ENCODE measurements at regions of chr22 and their contacts with region 1.

Region 1: DNA sequence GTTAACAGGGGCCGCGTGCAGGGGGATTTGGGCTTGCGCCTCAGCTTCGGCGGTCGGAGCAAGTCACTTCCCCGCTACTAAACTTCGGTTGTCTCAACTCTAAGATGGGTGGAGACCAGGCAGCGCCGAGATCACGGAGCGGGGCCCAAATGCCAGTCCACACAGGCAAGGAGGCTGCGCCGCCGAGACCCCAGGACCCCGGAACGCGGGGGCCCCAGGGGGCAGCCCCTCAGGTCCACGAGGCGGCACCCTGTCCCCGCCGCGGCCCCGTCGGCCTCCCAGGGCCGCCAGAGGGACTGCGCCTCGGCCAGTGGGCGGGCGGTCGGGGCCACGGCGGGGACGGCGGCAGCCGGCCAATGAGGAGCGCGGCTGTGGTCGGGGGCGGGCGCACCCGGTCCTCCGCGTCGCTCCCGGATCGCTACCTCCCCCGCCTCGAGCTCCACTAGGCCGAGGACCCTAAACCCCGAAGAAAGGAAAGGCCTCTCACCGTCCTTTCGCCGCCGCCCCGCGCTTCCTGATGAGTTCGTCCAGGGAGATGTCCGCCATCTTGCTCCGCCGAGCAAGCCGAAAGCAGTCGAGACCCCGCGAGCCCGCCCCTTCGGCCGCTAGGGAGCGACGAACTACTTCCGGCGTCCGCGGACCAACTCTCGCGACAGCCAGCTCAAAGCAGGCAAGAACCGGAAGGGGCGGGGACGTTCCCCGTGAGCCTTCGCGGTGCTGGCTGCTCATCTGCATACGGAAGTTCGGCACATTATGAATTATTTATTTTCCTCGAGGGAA is at the start of gene POLDIP3:
- DNase-seq: peak; percentile 90 to 96 (median 90)
- ATAC-seq: peak; percentile 87
- H3K4me3 ChIP-seq: peak within 1 kb of the TSS; percentile 61
- H3K27ac ChIP-seq: peak within 1 kb of the TSS; percentile 95
- H3K4me1 ChIP-seq: peaks cover 15 to 43% of the 10 kb centered on the region in 2 experiments; a peak in 4 of 5 replicates
- H3K27me3 ChIP-seq: no peaks in the 10 kb centered on the region
- CTCF ChIP-seq: peak in 2 of 3 experiments; percentile 21 to 38; a peak in 3 of 6 replicates
- EP300 ChIP-seq: no peak
- POLR2A ChIP-seq: no peak
- RAD21 ChIP-seq: no peak
- polyA plus RNA-seq, gene POLDIP3: 14.3 to 22.3 TPM

Region 2: DNA sequence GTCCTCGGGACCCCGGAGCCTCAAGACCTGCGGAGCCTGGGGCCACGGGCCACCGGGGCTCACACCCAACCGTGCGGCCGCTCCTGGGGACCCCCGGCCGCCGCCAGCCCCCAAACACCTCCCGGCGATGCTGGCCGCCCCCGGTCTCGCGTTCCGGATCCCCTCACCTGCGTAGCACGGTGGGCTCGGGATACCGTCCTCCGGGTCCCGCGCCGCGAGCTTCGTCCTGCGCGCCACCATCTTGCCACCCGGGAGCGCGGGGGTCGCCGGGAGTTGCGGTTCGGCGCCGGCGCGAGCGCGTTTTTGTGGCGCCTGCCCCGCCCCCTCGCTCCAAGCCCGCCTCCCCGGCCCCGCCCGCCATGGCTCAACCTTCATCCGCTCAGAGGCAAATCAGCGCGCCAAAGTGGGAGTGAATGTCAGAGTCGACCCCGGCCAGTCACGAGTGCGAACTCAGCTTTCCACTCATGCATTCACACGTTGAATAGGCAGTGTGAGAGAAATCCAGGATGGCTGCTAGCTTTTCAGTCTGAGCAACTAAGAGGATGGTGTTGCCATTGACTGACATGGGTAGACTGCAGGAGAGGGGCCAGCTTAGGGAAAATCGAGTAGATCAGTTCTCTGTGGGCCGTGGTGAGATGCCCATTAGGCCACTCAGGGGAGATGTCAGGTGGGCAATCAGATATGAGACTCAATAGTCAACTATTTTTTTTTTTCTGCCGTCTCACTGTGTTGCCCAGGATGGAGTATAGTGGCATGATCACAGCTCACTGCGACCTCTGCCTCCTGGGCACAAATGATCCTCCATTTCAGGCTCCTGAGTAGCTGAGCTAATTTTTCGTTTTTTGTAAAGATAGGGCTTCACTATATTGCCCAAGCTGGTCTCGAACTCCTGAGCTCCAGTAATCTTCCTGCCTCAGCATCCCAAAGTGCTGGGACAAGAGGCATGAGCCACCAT is 32.5 kb before region 1 on chr22:
- CTCF ChIA-PET with region 1: no interaction called
- POLR2A ChIA-PET with region 1: interaction called, 17 read pairs
- in situ Hi-C with region 1: no loop called
- intact Hi-C with region 1: no loop called
- DNase-seq: peak; percentile 70 to 87 (median 76)
- ATAC-seq: peak; percentile 97
- H3K4me3 ChIP-seq: peak overlapping the region; percentile 57
- H3K27ac ChIP-seq: peak overlapping the region; percentile 74
- H3K4me1 ChIP-seq: peaks cover 0 to 7% of the 10 kb centered on the region in 2 experiments; a peak in 2 of 5 replicates
- H3K27me3 ChIP-seq: no peaks in the 10 kb centered on the region
- CTCF ChIP-seq: no peak
- EP300 ChIP-seq: no peak
- POLR2A ChIP-seq: peak; percentile 71
- RAD21 ChIP-seq: no peak

Region 3: DNA sequence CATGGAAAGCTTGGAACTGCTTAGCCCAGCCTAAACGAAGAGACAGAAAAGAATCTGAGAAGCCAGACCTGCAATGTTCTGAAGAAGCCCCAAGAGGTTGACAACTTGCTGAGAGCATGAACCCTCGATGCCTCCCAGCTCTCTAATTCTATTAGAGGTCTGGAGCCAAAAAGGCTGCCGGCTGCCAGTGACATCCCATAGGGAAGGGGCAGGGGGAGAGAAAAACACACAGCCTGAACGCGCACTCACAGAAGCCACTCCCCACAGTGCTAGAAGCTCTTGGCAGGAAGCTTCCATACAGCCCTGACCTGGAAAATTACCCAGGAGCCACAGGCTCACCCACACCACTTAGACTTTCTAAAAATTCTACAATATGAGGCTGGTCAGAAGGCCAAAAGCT is 18.2 kb before region 1 on chr22:
- CTCF ChIA-PET with region 1: no interaction called
- POLR2A ChIA-PET with region 1: interaction called, 31 read pairs
- in situ Hi-C with region 1: no loop called
- intact Hi-C with region 1: no loop called
- DNase-seq: no peak
- ATAC-seq: no peak
- H3K4me3 ChIP-seq: no peak overlapping the region
- H3K27ac ChIP-seq: no peak overlapping the region
- H3K4me1 ChIP-seq: no peaks in the 10 kb centered on the region
- H3K27me3 ChIP-seq: no peaks in the 10 kb centered on the region
- CTCF ChIP-seq: no peak
- EP300 ChIP-seq: no peak
- POLR2A ChIP-seq: no peak
- RAD21 ChIP-seq: no peak

Region 4: DNA sequence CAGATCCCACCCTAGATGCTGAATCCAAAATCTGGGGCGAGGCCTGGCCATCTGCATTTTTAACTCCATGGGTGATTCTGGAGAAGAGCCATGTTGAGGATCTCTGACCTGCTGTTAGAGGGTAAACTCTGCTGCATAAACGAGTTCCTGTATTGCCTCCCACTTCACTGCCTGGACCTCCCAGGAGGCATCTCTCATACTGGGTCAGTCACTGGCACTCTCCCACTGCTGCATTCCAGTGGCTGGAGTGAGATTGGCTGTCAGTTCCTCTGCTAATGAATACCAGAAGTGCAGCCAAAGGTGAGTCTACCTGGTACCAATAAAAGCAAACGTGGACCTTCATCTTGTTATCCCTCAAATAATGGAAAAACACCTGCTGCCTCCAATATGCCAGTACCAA is 10.1 kb before region 1 on chr22:
- CTCF ChIA-PET with region 1: no interaction called
- POLR2A ChIA-PET with region 1: interaction called, 10 read pairs
- in situ Hi-C with region 1: no loop called
- intact Hi-C with region 1: no loop called
- DNase-seq: no peak
- ATAC-seq: no peak
- H3K4me3 ChIP-seq: no peak overlapping the region
- H3K27ac ChIP-seq: no peak overlapping the region; the same call in 2 of the 3 replicates
- H3K4me1 ChIP-seq: no peaks in the 10 kb centered on the region; a peak in 1 of 5 replicates
- H3K27me3 ChIP-seq: no peaks in the 10 kb centered on the region
- CTCF ChIP-seq: no peak
- EP300 ChIP-seq: no peak
- POLR2A ChIP-seq: no peak
- RAD21 ChIP-seq: no peak

Region 5: DNA sequence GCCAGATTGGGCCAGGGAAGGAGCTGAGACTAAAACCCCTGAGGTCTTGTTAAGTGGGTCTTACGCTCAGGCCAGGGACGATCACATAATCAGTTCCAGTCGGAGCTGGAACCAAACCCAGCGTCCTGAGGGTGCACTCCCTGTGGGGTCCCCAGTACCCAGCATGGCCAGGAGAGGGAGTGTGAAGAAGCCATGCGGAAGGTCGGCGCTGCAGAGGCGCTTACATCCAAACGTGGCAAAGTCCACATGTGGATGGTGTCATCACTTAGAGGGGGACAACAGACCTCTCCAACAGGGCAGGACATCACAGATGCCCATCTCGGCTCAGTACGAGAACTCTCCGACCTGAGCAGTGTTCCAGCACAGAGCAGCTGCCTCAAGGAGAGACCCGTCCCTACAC is 17.6 kb after region 1 on chr22:
- CTCF ChIA-PET with region 1: no interaction called
- POLR2A ChIA-PET with region 1: interaction called, 46 read pairs
- in situ Hi-C with region 1: no loop called
- intact Hi-C with region 1: no loop called
- DNase-seq: no peak
- ATAC-seq: peak; percentile 57
- H3K4me3 ChIP-seq: no peak overlapping the region
- H3K27ac ChIP-seq: no peak overlapping the region
- H3K4me1 ChIP-seq: peaks cover 0 to 8% of the 10 kb centered on the region in 2 experiments; a peak in 2 of 5 replicates
- H3K27me3 ChIP-seq: no peaks in the 10 kb centered on the region
- CTCF ChIP-seq: peak; percentile 14 to 23 (median 16); a peak in 1 of 6 replicates
- EP300 ChIP-seq: no peak
- POLR2A ChIP-seq: no peak
- RAD21 ChIP-seq: no peak

Region 6: DNA sequence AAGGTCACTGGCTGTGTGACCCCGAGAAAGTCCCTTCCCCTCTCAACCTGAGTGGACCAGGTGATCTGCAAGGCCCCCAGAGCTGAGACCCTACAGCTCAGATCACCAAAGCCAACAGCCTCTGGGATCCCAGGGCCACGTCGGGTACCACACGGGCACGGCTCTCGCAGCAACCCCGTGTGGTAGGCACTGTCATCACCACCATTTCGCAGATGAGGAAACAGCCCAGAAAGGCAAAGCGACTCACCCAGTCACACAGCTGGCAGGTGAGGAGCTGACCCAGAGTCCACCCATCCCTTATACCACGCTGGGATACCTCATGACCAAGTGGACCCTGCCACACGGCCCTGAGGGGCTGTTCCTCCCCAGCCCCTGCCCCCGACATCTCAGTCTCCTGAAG is 23.1 kb after region 1 on chr22:
- CTCF ChIA-PET with region 1: no interaction called
- POLR2A ChIA-PET with region 1: interaction called, 26 read pairs
- in situ Hi-C with region 1: no loop called
- intact Hi-C with region 1: no loop called
- DNase-seq: no peak
- ATAC-seq: no peak
- H3K4me3 ChIP-seq: no peak overlapping the region
- H3K27ac ChIP-seq: no peak overlapping the region
- H3K4me1 ChIP-seq: peaks cover under 1 to 9% of the 10 kb centered on the region in 2 experiments; a peak in 4 of 5 replicates
- H3K27me3 ChIP-seq: no peaks in the 10 kb centered on the region
- CTCF ChIP-seq: no peak
- EP300 ChIP-seq: no peak
- POLR2A ChIP-seq: no peak
- RAD21 ChIP-seq: no peak

Region 7: DNA sequence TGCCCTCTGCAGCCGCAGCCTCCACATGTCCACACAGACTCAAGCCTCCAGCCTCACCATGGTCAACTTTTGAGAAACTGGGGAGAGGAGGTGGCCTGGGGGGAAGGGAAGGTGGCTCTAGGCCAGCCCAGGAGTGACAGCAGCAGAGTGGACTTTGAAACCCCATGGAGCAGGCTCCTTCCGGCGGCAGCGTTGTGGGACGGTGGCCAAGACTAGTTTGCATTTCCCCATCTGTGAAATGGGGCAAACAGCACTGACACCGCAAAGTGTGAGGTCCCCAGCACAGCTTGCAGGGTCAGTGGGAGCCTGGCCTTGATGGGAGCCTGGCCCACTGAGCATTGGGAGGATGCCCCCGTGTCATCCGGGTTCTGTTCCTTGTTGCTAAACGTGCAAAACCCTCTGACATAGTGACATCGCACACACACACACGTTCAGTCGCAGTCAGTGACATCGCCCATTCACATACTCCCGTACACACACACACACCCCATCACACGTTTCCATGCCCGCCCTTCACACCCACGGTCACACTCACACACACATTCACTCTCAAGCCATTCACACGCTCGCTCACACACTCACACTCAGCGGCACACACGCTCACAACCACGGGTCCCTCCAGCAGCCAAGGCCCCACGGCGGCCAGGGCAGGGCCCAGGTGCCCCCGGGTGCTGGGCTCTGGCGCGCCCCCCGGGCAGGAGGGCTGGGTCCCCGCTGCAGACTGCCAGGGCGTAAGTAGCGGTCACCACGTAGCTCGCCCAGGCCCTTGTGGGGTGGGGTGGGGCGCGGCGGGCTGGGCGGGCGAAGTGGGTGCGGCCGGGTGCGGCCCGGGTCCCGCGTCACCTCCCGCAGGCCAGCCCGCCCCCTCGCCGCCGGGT is 34.1 kb after region 1 on chr22:
- CTCF ChIA-PET with region 1: no interaction called
- POLR2A ChIA-PET with region 1: interaction called, 26 read pairs
- in situ Hi-C with region 1: no loop called
- intact Hi-C with region 1: no loop called
- DNase-seq: peak in 2 of 4 experiments; percentile 56 to 88
- ATAC-seq: peak; percentile 65
- H3K4me3 ChIP-seq: peak overlapping the region; percentile 93
- H3K27ac ChIP-seq: peak overlapping the region; percentile 83
- H3K4me1 ChIP-seq: peaks cover 46 to 58% of the 10 kb centered on the region in 2 experiments
- H3K27me3 ChIP-seq: no peaks in the 10 kb centered on the region; a peak in 1 of 5 replicates
- CTCF ChIP-seq: no peak
- EP300 ChIP-seq: no peak
- POLR2A ChIP-seq: peak; percentile 28; the same call in 1 of the 2 replicates
- RAD21 ChIP-seq: no peak